Panc1 (cell line): ENCODE measurements at regions of chr3 and their contacts with region 1.

Region 1: DNA sequence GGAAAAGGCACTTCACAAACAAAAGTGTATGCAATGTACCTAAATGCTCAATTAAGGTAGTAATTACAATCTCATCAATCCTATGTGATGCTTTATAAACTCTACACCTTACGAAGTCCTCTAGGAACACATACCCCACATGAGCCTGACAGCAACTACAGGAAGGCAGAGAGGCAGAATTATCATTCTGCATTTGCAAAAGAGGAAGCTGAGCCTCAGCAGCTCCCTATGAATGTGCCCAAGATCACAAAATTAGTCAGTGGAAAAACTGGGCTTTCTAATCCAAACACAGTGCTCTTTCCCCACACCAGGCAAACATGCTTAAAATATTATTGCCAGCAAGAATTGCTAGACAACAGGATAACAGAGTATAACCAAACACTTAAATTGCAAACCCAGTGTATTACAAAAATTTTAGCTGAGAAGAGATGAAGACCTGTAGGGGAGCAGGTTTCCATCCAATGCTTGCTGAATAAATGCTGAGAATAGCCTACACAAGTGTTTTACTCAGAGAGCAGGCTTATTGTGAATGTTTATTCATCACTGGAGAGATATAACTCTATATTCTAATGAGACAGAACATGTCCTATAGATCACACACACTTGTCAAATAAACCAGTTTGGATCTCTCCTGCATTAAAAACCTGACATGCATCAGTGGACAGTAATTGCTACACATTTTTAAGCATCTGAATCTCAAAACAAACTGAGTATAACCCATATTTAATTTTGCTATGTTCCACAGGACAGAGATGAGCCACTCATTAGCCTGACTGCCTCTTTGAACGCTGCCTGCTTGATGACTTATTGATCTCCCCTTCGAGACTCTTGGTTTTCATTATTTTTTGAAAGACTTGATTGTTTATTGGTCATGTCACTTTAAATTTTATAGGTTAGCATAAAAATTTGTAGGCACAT is 62.2 kb downstream of the PLCH1 start:
- DNase-seq: no peak
- ATAC-seq: no peak
- H3K4me3 ChIP-seq: no peak overlapping the region
- H3K27ac ChIP-seq: no peak overlapping the region
- H3K4me1 ChIP-seq: no peaks in the 10 kb centered on the region
- H3K27me3 ChIP-seq: no peaks in the 10 kb centered on the region
- CTCF ChIP-seq: no peak

Region 2: DNA sequence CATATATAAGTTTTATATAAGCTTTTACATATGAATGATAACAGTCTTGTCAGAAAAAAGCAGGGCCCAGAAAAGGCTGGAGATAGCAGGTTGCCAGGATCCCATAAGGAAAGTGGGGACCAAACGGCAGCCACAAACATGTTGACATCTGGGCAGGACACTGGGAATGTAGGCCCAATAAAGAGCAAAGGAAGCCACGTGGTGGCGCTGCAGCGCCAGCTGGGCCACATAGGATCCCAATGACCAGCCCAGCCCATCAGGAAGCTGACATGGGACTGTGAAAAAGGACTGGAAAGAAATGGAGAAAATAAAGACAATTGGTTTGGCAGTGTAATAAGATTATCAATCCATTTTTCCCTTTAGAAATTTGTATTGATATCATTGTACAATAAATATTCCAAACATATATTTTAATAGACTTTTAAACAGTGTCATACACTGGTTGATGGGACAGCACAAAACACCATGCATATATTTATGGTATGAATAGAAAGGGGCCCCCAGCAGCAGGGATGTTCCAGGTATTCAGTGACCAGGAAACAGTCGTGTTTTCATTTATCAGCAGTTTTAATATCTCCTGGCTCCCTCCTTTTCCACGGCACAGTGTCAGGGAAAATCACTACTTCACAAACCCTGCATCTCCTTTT is 300.2 kb before region 1 on chr3:
- CTCF ChIA-PET with region 1: interaction called, 11 read pairs
- POLR2A ChIA-PET with region 1: no interaction called
- in situ Hi-C with region 1: no loop called
- intact Hi-C with region 1: no loop called
- DNase-seq: peak; percentile 27
- ATAC-seq: peak; percentile 91
- H3K4me3 ChIP-seq: no peak overlapping the region
- H3K27ac ChIP-seq: no peak overlapping the region
- H3K4me1 ChIP-seq: no peaks in the 10 kb centered on the region
- H3K27me3 ChIP-seq: no peaks in the 10 kb centered on the region
- CTCF ChIP-seq: peak; percentile 83

Region 3: DNA sequence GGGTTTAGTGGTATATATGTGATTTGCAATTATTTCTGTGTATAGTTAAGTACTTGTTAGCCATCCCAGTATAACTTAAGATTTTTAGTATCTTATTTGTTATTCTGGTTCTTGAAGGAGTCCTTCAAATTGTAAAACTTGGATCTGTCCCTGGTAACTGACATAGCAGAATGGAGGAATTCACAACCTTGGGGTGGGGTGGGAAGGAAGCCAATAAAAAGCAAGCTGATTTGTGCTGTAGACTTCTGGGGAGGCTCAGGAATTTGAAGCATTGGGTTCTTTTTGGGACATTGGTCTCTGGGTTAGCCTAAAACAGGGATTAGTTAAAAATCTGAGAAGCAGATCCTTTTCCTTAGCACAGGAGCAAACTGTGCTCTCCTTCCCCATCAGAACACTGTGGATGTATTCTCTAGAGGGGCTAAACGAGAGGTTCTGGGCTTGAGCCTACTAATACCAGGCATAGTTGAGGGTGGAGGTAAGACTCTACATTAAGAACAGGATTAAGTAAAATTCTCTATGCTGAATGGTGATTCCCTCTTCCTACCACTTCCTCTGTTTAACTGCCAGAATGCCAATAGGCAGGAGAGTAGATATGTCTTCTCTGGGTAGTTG is 230.0 kb after region 1 on chr3:
- CTCF ChIA-PET with region 1: no interaction called
- POLR2A ChIA-PET with region 1: no interaction called
- in situ Hi-C with region 1: no loop called
- intact Hi-C with region 1: no loop called
- DNase-seq: no peak
- ATAC-seq: 0 out of 2 replicates have a peak, but pooled peaks have one; percentile 30
- H3K4me3 ChIP-seq: no peak overlapping the region
- H3K27ac ChIP-seq: no peak overlapping the region
- H3K4me1 ChIP-seq: no peaks in the 10 kb centered on the region
- H3K27me3 ChIP-seq: no peaks in the 10 kb centered on the region
- CTCF ChIP-seq: no peak